Dorsolateral prefrontal cortex (tissue), 120 donors: ENCODE measurements at regions of chr20 and their contacts with region 1.

Region 1: GRCh38 chr20:815914-816606 is 17.5 kb upstream of the FAM110A start:
- DNase-seq: peak in 8 of 10 donors; percentile 39 to 71 (median 48)
- H3K4me3 ChIP-seq: no peak overlapping the region
- H3K27ac ChIP-seq: no peak overlapping the region
- H3K27me3 ChIP-seq: peaks cover 0 to 9% (median 0%) of the 10 kb centered on the region in 45 donors
- CTCF ChIP-seq: peak; percentile 85 to 99 (median 96)

Region 2: DNA sequence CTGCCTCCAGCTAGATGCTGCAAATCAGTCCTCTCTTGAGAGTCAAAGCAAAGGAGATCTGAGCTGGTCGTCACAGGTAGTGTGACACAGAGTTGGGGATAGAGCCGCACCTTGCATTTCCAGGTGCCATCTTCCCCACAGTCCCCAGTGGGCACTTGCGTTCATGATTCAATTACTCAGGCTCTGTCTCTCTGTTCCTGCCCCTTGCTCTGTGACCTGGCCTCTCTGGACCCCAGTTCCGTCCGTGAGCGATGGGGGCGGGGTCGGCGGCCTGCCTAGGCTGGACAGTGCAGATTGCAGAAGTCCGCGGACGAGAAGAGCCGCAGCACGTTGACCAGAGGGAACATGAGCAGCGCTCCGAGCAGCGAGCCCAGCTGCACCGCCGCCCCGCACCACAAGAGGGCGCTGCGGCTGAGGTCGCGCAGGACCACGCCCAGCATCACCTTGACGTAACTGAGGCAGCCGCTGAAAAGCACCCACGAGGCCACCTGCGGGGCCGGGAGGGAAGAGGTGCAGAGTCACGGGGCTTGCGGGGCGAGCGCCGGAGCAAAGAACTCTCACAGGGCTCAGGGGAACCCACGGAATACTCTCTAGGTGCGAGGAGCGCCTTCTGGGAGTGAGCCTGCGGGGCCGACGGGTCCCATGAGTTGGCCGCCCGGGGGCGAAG is 55.2 kb before region 1 on chr20:
- intact Hi-C with region 1: no loop called
- DNase-seq: no peak
- H3K4me3 ChIP-seq: no peak overlapping the region
- H3K27ac ChIP-seq: no peak overlapping the region
- H3K27me3 ChIP-seq: peaks cover 0 to 19% (median 0%) of the 10 kb centered on the region in 45 donors
- CTCF ChIP-seq: peak in 54 of 56 donors; percentile 19 to 72 (median 54)

Region 3: GRCh38 chr20:805713-806112 is 10.3 kb before region 1 on chr20:
- intact Hi-C with region 1: no loop called
- DNase-seq: no peak
- H3K4me3 ChIP-seq: no peak overlapping the region
- H3K27ac ChIP-seq: no peak overlapping the region
- H3K27me3 ChIP-seq: peaks cover 0 to 15% (median 0%) of the 10 kb centered on the region in 45 donors
- CTCF ChIP-seq: no peak

Region 4: DNA sequence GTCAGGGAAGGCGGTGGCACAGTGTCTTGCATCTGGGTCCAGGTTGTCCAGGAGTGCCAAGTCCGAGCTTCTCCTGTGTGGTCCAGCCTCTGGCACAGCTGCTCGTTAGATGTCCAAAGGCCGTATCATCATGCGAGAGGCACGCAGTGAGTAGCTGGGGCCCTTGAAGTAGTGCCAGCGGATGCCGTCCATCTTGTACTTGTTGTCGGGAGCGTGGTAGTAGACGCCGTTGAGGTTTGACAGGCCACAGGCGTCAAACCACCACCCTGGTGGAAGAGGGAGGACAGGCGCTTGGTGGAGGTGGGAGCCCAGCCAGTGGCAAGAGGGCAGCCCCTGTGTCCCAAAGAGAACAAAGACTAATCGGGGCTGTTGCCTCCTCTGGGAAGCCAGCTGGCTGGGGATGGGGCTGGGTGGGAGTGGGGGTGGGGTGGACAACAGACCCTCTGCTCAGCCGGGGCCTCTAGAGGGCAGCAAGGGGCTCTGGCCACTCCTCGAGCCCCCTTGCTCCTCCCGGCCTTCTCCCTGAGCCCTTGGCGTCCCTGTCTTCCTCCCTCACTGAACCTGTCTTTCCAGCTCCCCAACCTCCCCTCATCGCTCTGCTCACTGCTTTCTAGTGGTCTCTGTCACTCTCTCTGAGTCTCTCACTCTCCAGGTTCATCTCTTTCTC is 56.9 kb after region 1 on chr20:
- intact Hi-C with region 1: no loop called
- DNase-seq: no peak
- H3K4me3 ChIP-seq: no peak overlapping the region
- H3K27ac ChIP-seq: no peak overlapping the region
- H3K27me3 ChIP-seq: peaks cover 0 to 11% (median 0%) of the 10 kb centered on the region in 45 donors
- CTCF ChIP-seq: no peak

Region 5: GRCh38 chr20:956330-956951 is 140.4 kb after region 1 on chr20:
- intact Hi-C with region 1: loop called (anchors 1 kb)
- DNase-seq: peak; percentile 33 to 81 (median 61)
- H3K4me3 ChIP-seq: no peak overlapping the region
- H3K27ac ChIP-seq: no peak overlapping the region
- H3K27me3 ChIP-seq: peaks cover 0 to 40% (median 14%) of the 10 kb centered on the region in 45 donors
- CTCF ChIP-seq: peak; percentile 38 to 100 (median 95)

Region 6: GRCh38 chr20:1075616-1076015 is 259.6 kb after region 1 on chr20:
- intact Hi-C with region 1: no loop called
- DNase-seq: no peak
- H3K4me3 ChIP-seq: no peak overlapping the region
- H3K27ac ChIP-seq: no peak overlapping the region
- H3K27me3 ChIP-seq: no peaks in the 10 kb centered on the region
- CTCF ChIP-seq: no peak

Region 7: DNA sequence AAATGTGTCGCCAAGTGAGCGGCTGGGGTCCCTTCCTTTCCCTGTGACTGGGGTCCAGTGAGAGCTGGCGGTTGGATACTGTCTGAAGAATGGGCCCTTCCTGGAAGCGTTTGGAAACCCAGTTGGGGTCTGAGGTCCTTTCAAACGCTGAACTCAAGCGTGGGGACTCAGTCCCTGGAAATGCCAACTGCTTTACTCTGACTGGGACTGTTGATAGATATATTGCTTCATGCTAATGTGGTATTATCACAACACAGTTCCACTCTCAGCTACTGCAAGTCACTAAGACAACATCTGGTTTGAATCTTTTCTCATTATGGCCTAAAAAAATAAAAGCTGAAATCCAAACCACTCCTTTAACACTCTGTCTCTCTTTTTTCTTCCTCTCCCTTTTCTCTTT is 278.7 kb after region 1 on chr20:
- intact Hi-C with region 1: loop called in 1 of 2 experiments (anchors 10 kb)
- DNase-seq: no peak
- H3K4me3 ChIP-seq: no peak overlapping the region
- H3K27ac ChIP-seq: no peak overlapping the region
- H3K27me3 ChIP-seq: no peaks in the 10 kb centered on the region
- CTCF ChIP-seq: no peak

Region 8: GRCh38 chr20:1108437-1108920 is 292.4 kb after region 1 on chr20:
- intact Hi-C with region 1: loop called in 1 of 2 experiments (anchors 5 kb)
- DNase-seq: peak in 9 of 10 donors; percentile 32 to 76 (median 63)
- H3K4me3 ChIP-seq: no peak overlapping the region
- H3K27ac ChIP-seq: no peak overlapping the region
- H3K27me3 ChIP-seq: no peaks in the 10 kb centered on the region
- CTCF ChIP-seq: peak; percentile 25 to 79 (median 70)

Region 9: DNA sequence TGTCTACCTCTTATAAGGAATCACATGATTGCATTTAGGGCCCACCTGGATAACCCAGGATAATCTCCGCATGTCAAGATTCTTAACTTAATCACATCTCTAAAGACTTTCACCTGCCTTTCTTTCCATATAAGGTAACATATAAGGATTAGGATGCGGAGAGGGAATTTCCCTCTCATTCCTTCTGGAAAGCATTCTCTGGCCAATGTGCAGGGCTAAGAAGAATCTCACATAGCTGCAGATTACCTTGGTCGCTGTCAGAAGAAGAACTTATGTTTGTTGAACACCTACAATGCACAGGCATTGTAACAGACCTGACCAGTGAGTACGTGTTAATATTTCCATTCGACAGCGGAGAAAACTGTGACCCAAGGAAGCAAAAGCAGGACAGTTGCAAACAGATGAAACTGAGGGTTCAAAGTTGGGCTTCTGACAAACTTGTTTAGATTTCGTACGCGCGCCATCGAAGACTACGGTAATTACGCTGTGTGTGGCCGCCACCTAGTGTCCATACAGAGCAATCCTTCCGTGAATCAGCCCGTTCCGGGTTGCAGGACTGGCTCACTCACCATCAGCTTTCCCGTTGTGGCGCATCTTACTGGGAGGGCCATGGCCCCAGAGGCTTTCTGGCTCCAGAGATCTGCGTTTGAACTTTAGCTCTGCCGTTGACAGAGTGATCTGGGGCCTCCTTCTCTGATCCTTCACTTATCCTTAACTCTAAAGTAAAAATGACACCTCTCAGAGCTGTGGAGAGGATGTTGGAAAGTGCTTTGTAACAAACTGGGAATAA is 396.7 kb after region 1 on chr20:
- intact Hi-C with region 1: loop called (anchors 5 to 10 kb)
- DNase-seq: peak; percentile 52 to 82 (median 68)
- H3K4me3 ChIP-seq: peak overlapping the region in 2 of 59 donors; percentile 1 to 5
- H3K27ac ChIP-seq: no peak overlapping the region
- H3K27me3 ChIP-seq: no peaks in the 10 kb centered on the region
- CTCF ChIP-seq: peak; percentile 47 to 89 (median 80)